Activated T-helper 1 cell treated with anti-CD3 and anti-CD28 coated beads, Interleukin-12 subunit alpha, Interleukin-12 subunit beta, Interleukin-2, Interleukin-4 antibody, amounts not matched to agents 30 ng/mL and 10 ng/mL and 1 ng/mL, durations not matched to agents 14 hours and 24 hours and 36 hours (primary cell): ENCODE measurements at regions of chr15 and their contacts with region 1.

Region 1: GRCh38 chr15:90954712-90955671 is at the start of gene RCCD1:
- DNase-seq: peak; percentile 90
- H3K4me3 Mint-ChIP-seq: peak within 1 kb of the TSS; percentile 90
- H3K27ac Mint-ChIP-seq: peak within 1 kb of the TSS; percentile 90
- H3K4me1 Mint-ChIP-seq: peaks cover 24% of the 10 kb centered on the region
- H3K27me3 Mint-ChIP-seq: no peaks in the 10 kb centered on the region
- total RNA-seq, gene RCCD1: 26.4 and 27.2 TPM in 2 replicates

Region 2: DNA sequence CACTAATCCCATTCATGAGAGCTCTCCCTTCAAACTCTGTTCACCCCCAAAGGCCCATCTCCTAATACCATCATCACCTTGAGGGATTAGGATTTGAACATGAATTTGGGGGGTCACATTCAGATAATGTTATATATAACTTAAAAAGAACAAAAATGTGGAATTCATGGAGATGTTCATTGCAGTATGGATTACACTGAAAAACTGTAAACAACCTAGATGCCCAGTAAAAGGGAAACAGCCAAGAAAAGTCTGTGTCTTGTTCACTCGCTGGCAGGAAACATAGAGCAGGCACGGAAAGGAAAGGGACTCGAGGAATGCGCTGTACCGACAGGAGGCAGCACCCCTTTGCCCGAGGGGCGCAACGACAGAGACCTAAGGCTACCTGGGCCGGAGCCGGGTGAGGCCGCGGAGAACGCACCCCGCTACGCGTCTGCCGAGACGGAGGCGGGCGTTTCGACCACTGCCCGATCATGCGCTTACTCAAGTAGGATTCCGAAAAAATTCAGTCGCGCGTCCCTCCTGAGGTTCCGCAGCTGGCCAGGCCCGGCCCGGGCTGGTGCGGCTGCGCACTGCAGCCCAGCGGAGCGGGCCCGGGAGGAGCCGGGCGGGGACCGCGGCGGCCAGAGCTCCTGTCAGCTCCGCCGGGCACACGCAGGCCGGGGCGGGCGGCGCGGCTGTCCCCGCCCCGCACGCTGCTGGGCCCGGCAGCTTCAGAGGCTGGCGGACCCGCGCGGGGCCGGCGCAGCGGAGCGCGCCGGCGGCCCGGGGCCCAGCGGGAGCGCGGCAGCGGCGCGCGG is 52.8 kb before region 1 on chr15:
- intact Hi-C with region 1: loop called (anchors 1 kb)
- DNase-seq: peak; percentile 69
- H3K4me3 Mint-ChIP-seq: peak overlapping the region; percentile 79
- H3K27ac Mint-ChIP-seq: peak overlapping the region; percentile 82
- H3K4me1 Mint-ChIP-seq: peaks cover 44% of the 10 kb centered on the region
- H3K27me3 Mint-ChIP-seq: no peaks in the 10 kb centered on the region

Region 3: GRCh38 chr15:90994417-90995311 is 39.7 kb after region 1 on chr15 and contains the start of gene PRC1:
- intact Hi-C with region 1: loop called (anchors 1 kb)
- DNase-seq: peak; percentile 99
- H3K4me3 Mint-ChIP-seq: peak within 1 kb of the TSS; percentile 100
- H3K27ac Mint-ChIP-seq: peak within 1 kb of the TSS; percentile 100
- H3K4me1 Mint-ChIP-seq: peaks cover 42% of the 10 kb centered on the region
- H3K27me3 Mint-ChIP-seq: no peaks in the 10 kb centered on the region
- total RNA-seq, gene PRC1: 78.4 and 86.0 TPM in 2 replicates

Region 4: GRCh38 chr15:91022075-91022835 is 67.3 kb after region 1 on chr15 and contains the start of gene VPS33B:
- intact Hi-C with region 1: loop called (anchors 1 kb)
- DNase-seq: peak; percentile 73
- H3K4me3 Mint-ChIP-seq: peak within 1 kb of the TSS; percentile 93
- H3K27ac Mint-ChIP-seq: peak within 1 kb of the TSS; percentile 94
- H3K4me1 Mint-ChIP-seq: peaks cover 40% of the 10 kb centered on the region
- H3K27me3 Mint-ChIP-seq: no peaks in the 10 kb centered on the region
- total RNA-seq, gene VPS33B: 20.8 and 20.9 TPM in 2 replicates

Region 5: GRCh38 chr15:91032919-91033803 is 78.2 kb after region 1 on chr15:
- intact Hi-C with region 1: loop called (anchors 1 kb)
- DNase-seq: peak; percentile 41
- H3K4me3 Mint-ChIP-seq: no peak overlapping the region
- H3K27ac Mint-ChIP-seq: no peak overlapping the region
- H3K4me1 Mint-ChIP-seq: peaks cover 5% of the 10 kb centered on the region
- H3K27me3 Mint-ChIP-seq: peaks cover 4% of the 10 kb centered on the region

Region 6: DNA sequence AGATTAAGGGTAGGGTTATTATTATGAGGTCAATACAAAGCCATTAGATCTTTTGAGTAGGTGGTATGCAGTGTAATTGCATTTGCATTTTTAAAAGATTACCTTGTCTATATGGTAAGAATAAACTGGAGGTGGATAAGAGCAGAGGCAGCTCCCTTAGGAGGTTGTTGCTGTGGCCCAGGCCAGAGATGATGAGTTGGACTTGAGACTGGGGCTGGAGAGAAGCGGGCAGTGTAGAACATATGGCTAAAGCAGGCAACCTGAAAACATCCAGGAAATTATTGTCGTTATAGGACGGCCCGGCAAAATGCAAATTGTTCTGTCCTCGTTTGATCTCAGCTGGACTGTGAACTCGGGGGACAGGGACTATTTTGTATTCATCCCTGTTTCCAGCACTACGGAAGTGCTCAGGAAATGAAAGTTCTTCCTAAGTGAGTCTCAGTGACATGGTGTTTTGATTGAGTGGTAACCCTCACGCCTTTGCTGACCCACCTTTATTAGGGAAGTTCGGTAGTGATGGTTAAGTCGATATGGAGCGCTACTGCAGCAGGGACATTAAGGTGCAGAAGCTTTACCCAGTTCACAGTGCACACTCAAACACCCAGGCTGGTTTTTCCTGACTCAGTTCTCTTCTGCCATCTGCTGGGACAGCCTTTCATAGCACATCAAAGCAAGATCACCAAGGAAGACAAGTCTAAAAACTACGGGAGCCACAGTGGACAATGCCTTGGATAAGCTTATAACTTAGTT is 94.6 kb after region 1 on chr15:
- intact Hi-C with region 1: loop called (anchors 1 kb)
- DNase-seq: peak; percentile 51
- H3K4me3 Mint-ChIP-seq: no peak overlapping the region
- H3K27ac Mint-ChIP-seq: no peak overlapping the region
- H3K4me1 Mint-ChIP-seq: peaks cover 20% of the 10 kb centered on the region
- H3K27me3 Mint-ChIP-seq: peaks cover 41% of the 10 kb centered on the region

Region 7: GRCh38 chr15:91271565-91272153 is 316.7 kb after region 1 on chr15:
- intact Hi-C with region 1: loop called (anchors 1 kb)
- DNase-seq: peak; percentile 38
- H3K4me3 Mint-ChIP-seq: peak overlapping the region; percentile 38
- H3K27ac Mint-ChIP-seq: no peak overlapping the region
- H3K4me1 Mint-ChIP-seq: peaks cover 9% of the 10 kb centered on the region
- H3K27me3 Mint-ChIP-seq: peaks cover 33% of the 10 kb centered on the region

Region 8: DNA sequence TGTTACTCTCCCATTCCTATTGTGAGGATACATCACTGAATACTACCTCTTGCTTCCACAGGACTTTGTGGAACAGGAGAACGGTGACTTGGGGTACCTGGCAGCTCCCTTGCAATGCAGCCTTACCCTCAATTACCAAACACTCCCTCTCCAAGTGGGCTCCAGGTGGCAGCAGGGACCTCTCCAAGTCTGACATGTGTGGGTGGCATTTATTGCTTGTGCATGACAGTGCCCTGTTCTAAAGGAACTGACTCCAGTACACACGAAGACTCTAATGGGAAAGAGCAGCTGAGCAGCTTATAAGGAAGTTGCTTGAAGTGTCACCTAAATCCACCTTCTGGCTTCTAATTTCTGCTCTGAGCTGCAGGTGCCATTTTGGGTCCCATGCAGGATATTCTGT is 724.4 kb after region 1 on chr15:
- intact Hi-C with region 1: no loop called
- DNase-seq: no peak
- H3K4me3 Mint-ChIP-seq: no peak overlapping the region
- H3K27ac Mint-ChIP-seq: no peak overlapping the region
- H3K4me1 Mint-ChIP-seq: no peaks in the 10 kb centered on the region
- H3K27me3 Mint-ChIP-seq: peaks cover 38% of the 10 kb centered on the region